ENCODE measurements at regions of chr1 and their contacts with region 1.

Region 1: DNA sequence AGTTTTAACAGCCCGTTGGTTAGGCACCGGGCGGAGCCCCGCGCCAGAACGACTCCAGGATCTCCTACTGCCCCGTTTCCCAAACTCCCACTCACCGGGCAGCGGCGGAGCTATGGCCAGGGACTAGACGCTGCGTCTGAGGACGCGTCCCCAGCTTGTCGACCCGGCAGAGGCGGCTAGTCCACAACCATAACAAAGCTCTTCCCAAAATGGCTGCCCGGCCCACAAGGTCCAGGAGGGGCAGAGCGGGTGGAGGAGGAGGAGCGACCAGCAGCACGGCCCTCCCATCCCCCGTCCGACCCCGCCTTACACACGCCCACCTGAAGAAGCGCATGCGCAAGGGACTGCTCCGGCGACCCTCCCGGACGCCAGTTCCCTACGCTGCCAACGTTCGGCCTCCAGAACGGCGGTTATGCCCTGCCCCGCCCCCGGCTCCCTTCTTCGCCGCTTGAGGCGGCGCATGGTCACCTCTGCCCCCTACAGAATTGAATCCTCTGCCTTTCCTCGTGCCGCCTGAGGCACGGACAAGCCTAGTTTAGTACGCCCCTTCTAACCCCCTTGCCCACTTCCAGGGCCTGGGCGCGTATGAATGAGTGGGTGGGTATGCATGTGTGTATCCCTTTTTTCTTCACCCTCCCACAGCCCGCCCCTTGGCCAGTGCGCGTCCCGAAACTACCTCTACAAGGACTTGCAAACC is at the start of gene GPBP1L1:
- DNase-seq: peak; percentile 99
- ATAC-seq: peak; percentile 92
- total RNA-seq, gene GPBP1L1: 74.0 TPM

Region 2: DNA sequence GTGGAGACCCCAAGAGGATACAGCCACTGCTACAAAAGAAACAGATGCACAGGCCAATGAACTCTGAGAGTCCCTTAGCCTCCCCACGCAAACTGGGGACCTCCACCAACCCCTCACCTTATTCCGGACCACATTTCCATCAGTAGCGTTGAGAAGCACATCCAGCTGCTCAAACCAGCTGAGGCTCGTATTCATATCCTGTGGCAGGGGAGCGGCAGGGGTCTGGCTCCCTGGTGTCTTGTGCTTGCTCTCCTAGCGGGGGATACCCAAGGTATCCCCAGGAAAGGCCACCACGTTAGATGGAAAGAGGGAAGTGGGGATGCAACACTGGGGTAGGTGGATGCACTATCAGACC is 187.1 kb before region 1 on chr1:
- intact Hi-C with region 1: no loop called
- DNase-seq: no peak
- ATAC-seq: no peak

Region 3: DNA sequence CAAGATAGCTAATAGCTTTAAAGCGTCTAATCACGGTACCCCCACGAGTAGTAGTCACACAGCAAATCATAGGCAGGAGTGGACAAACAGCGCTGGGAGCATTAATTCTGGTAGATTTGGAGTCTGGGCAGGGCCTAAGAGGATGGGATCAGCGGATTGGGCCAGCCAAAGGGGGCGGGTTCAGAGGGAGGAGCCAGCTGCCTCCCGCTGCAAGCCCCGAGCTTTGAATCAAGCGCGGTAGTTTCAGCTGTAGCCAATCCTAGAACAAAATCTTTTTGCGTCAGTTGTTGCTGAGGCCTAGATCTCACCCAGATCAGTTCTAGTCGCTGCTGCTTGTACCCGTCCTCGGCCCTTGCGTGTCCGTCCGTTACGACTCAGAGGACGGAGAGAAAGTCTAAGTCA is 103.2 kb before region 1 on chr1:
- intact Hi-C with region 1: loop called (anchors 2 kb)
- DNase-seq: peak; percentile 95
- ATAC-seq: peak; percentile 93

Region 4: DNA sequence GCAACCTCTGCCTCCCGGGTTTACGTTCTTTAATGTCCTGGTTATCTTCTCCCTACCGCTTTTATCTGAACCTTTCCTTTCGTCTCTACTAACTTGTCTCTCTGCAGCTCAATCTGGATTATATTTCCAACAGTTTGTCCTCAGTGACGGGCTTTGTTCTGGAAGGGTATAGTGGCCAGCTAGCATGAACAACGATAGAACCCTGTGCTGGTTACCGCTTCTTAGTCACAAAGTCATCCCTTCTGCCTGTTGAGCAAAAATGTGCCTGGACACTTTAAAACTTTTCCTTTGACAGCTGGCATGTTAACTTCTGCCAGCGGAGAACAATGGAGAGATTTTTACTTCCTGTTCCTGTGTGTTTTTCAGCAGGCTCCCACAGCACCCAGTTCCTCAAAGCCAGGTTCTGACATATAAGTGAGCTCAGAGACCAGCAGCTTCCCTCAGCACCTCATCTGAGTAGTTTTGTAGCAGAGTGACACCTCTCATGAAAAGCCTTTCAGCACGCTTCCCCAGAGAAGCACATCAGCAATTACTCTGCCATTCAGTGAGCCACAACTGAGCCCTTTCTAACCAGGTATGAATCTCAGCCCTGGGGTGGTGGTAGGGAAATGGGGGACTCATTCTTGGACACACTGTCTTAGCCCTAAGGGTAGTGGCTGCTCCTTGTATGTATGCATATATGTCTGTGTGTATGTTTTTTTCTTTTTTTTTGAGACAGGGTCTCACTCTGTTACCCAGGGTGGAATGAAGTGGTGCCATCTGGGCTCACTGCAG is 39.0 kb before region 1 on chr1:
- intact Hi-C with region 1: loop called (anchors 2 kb)
- DNase-seq: no peak
- ATAC-seq: peak; percentile 62

Region 5: GRCh38 chr1:45750298-45751038 is 64.0 kb after region 1 on chr1 and contains the start of gene IPP:
- intact Hi-C with region 1: loop called (anchors 2 kb)
- DNase-seq: peak; percentile 99
- ATAC-seq: peak; percentile 99
- total RNA-seq, gene IPP: 11.6 TPM

Region 6: GRCh38 chr1:46132529-46133180 is 446.2 kb after region 1 on chr1 and contains the start of gene PIK3R3:
- intact Hi-C with region 1: loop called (anchors 5 kb)
- DNase-seq: peak; percentile 98
- ATAC-seq: peak; percentile 98
- total RNA-seq, gene PIK3R3: 22.6 TPM

Region 7: DNA sequence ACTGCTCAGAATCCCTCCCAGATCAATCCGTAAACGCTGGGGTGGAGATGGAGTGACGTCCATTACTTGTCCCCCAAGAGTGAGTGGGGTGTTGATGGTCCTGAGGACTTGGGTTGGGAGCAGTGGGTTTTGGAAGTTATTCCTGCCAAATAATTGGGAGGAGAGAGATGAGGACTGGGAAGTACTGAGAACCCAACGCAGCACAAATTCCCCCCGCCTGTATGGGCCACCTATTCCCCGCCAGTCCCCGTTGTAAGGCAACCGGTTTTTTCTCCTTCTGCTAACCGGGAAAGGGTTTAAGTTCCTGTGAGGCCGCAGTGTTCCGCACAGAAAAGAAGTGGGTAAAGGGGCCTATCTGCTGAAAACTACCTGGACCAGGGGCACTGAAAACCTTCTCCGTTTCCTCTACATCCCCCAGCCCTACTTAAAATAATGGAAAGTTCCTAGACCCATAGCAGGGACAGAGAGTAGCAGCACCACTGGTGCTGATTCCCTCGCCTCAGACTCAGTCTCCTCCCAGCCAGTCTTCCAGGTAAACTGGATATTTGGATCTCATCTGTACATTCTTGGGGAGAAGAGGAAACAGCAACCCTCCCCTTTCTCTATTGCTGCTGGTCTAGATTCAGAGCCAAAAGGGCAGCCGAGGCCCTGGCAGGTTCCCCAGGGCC is 517.4 kb after region 1 on chr1:
- intact Hi-C with region 1: no loop called
- DNase-seq: no peak
- ATAC-seq: peak; percentile 16

Measured in Right ventricle myocardium inferior (tissue), 1 donor.